ENCODE measurements at regions of chr5 and their contacts with region 1.

Region 1: GRCh38 chr5:131170540-131171275 is at the start of gene LYRM7:
- DNase-seq: peak; percentile 98
- H3K4me3 Mint-ChIP-seq: peak within 1 kb of the TSS; percentile 97
- H3K27ac Mint-ChIP-seq: peak within 1 kb of the TSS; percentile 92
- H3K4me1 Mint-ChIP-seq: peaks cover 37% of the 10 kb centered on the region
- H3K27me3 Mint-ChIP-seq: no peaks in the 10 kb centered on the region
- total RNA-seq, gene LYRM7: 16.6 to 18.6 TPM

Region 2: DNA sequence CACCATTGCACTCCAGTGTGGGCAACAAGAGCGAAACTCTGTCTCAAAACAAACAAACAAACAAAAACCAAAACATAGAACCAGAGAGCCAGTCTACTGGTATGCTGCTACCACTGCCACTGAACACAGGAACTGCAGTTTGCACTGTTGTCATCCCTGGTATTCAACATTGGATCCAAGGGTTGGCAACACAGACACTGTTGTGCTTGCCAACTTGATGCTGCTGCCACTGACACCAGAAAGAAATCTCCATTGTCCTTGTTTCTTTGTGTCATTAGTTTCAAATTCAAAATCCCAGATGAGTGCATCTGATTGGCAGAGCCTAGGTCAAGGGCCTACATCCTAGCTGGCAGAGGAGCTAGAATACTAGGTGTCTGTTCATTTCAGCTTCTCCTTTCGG is 21.9 kb before region 1 on chr5:
- CTCF ChIA-PET with region 1: no interaction called
- POLR2A ChIA-PET with region 1: no interaction called
- intact Hi-C with region 1: no loop called
- DNase-seq: no peak
- H3K4me3 Mint-ChIP-seq: no peak overlapping the region
- H3K27ac Mint-ChIP-seq: no peak overlapping the region
- H3K4me1 Mint-ChIP-seq: no peaks in the 10 kb centered on the region
- H3K27me3 Mint-ChIP-seq: no peaks in the 10 kb centered on the region

Region 3: GRCh38 chr5:131218392-131218791 is 47.7 kb after region 1 on chr5:
- CTCF ChIA-PET with region 1: no interaction called
- POLR2A ChIA-PET with region 1: no interaction called
- intact Hi-C with region 1: loop called (anchors 2 kb)
- DNase-seq: no peak
- H3K4me3 Mint-ChIP-seq: no peak overlapping the region
- H3K27ac Mint-ChIP-seq: no peak overlapping the region
- H3K4me1 Mint-ChIP-seq: peaks cover 43% of the 10 kb centered on the region
- H3K27me3 Mint-ChIP-seq: no peaks in the 10 kb centered on the region